H1 (cell line): ENCODE measurements at regions of chr5 and their contacts with region 1.

Region 1: GRCh38 chr5:180071531-180072255 is at the start of gene RNF130:
- DNase-seq: peak in 1 of 2 experiments; percentile 96
- H3K4me3 ChIP-seq: peak within 1 kb of the TSS; percentile 78 to 94 (median 93)
- H3K27ac ChIP-seq: peak within 1 kb of the TSS; percentile 82
- H3K4me1 ChIP-seq: peaks cover 2 to 11% (median 8%) of the 10 kb centered on the region in 4 experiments; a peak in 4 of 7 replicates
- H3K27me3 ChIP-seq: peaks cover 6 to 18% (median 16%) of the 10 kb centered on the region in 4 experiments
- CTCF ChIP-seq: no peak
- EP300 ChIP-seq: no peak
- POLR2A ChIP-seq: peak in 1 of 2 experiments; percentile 67; a peak in 2 of 3 replicates
- RAD21 ChIP-seq: no peak; a peak in 1 of 4 replicates
- total RNA-seq, gene RNF130: 63.1 and 65.1 TPM in 2 replicates

Region 2: GRCh38 chr5:179923436-179923835 is 148.3 kb before region 1 on chr5:
- CTCF ChIA-PET with region 1: no interaction called
- POLR2A ChIA-PET with region 1: no interaction called
- DNase-seq: no peak
- H3K4me3 ChIP-seq: no peak overlapping the region
- H3K27ac ChIP-seq: no peak overlapping the region
- H3K4me1 ChIP-seq: peaks cover 0 to 2% (median 0%) of the 10 kb centered on the region in 4 experiments; a peak in 1 of 7 replicates
- H3K27me3 ChIP-seq: no peaks in the 10 kb centered on the region
- CTCF ChIP-seq: no peak
- EP300 ChIP-seq: no peak
- POLR2A ChIP-seq: no peak
- RAD21 ChIP-seq: no peak

Region 3: DNA sequence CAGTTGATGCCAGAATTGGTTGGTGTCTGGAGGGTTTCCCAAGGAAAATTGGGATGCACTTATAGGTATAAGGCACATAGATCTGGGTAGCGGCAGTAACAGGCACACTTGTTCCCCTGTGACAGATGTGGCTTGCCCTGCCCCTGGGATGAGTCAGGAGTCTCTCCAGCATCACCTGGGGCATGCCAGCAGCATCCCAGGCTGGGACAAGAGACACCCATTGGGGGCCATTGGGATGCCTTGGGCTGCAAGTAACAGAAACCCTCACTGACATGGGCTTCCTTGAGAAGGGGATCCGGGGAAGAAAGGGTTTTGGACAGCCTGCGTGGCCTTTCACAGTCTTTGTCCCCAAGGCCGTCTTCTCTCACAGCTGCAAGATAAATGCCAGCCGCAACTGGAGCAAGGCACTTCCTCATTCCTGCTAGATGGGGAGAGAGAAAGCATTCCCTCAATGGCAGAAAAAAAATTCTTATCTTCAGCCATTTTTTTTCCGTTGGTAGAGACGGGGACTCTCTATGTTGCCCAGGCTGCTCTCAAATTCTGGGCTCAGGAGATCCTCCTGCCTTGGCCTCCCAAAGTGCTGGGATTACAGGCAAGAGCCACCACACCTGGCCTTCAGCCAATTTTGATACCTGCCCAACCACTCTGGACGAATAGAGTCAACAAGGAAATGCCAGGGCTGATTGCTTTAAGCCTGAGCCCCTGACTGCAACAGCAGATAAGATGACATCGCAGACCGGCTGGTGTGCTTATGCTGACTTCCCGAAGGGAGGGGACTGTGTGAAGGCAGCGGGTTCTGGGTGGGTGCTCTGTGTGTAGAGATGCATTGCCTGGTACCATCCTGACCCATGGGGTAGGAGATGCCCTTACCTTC is 13.2 kb after region 1 on chr5:
- CTCF ChIA-PET with region 1: interaction called, 15 read pairs
- POLR2A ChIA-PET with region 1: interaction called, 40 read pairs
- DNase-seq: peak in 1 of 2 experiments; percentile 51
- H3K4me3 ChIP-seq: no peak overlapping the region
- H3K27ac ChIP-seq: peak overlapping the region; percentile 95; the same call in 1 of the 2 replicates
- H3K4me1 ChIP-seq: peaks cover 19 to 40% (median 27%) of the 10 kb centered on the region in 4 experiments
- H3K27me3 ChIP-seq: peaks cover 0 to 3% (median 2%) of the 10 kb centered on the region in 4 experiments; a peak in 2 of 7 replicates
- CTCF ChIP-seq: no peak
- EP300 ChIP-seq: no peak
- POLR2A ChIP-seq: peak in 1 of 2 experiments; percentile 28; a peak in 1 of 3 replicates
- RAD21 ChIP-seq: no peak

Region 4: GRCh38 chr5:180126726-180127681 is 55.3 kb after region 1 on chr5:
- CTCF ChIA-PET with region 1: no interaction called
- POLR2A ChIA-PET with region 1: no interaction called
- DNase-seq: peak in 1 of 2 experiments; percentile 87
- H3K4me3 ChIP-seq: no peak overlapping the region; a peak in 1 of 8 replicates
- H3K27ac ChIP-seq: no peak overlapping the region
- H3K4me1 ChIP-seq: no peaks in the 10 kb centered on the region
- H3K27me3 ChIP-seq: no peaks in the 10 kb centered on the region; a peak in 1 of 7 replicates
- CTCF ChIP-seq: peak in 2 of 3 experiments; percentile 82 to 87; a peak in 3 of 4 replicates
- EP300 ChIP-seq: no peak
- POLR2A ChIP-seq: no peak
- RAD21 ChIP-seq: peak; percentile 81 to 87